Mammary epithelial cell (primary cell): ENCODE measurements at regions of chr2 and their contacts with region 1.

Region 1: GRCh38 chr2:85772019-85772745 is 18.4 kb downstream of the ATOH8 start:
- DNase-seq: peak; percentile 93
- H3K4me3 ChIP-seq: no peak overlapping the region
- H3K27ac ChIP-seq: no peak overlapping the region
- H3K4me1 ChIP-seq: peaks cover 18% of the 10 kb centered on the region
- H3K27me3 ChIP-seq: peaks cover 9% of the 10 kb centered on the region
- CTCF ChIP-seq: peak; percentile 40 to 56

Region 2: GRCh38 chr2:85750587-85751575 is 21.3 kb before region 1 on chr2:
- CTCF ChIA-PET with region 1: no interaction called
- dilution Hi-C with region 1: no loop called
- in situ Hi-C with region 1: no loop called
- intact Hi-C with region 1: loop called (anchors 1 kb)
- DNase-seq: peak; percentile 28
- H3K4me3 ChIP-seq: no peak overlapping the region
- H3K27ac ChIP-seq: no peak overlapping the region
- H3K4me1 ChIP-seq: peaks cover 12% of the 10 kb centered on the region
- H3K27me3 ChIP-seq: peaks cover 40% of the 10 kb centered on the region
- CTCF ChIP-seq: peak; percentile 90 to 95

Region 3: GRCh38 chr2:85785871-85786270 is 13.7 kb after region 1 on chr2:
- CTCF ChIA-PET with region 1: no interaction called
- dilution Hi-C with region 1: no loop called
- in situ Hi-C with region 1: no loop called
- intact Hi-C with region 1: loop called (anchors 2 kb)
- DNase-seq: no peak
- H3K4me3 ChIP-seq: no peak overlapping the region
- H3K27ac ChIP-seq: no peak overlapping the region
- H3K4me1 ChIP-seq: no peaks in the 10 kb centered on the region
- H3K27me3 ChIP-seq: no peaks in the 10 kb centered on the region
- CTCF ChIP-seq: no peak